ENCODE measurements at regions of chr14 and their contacts with region 1.

Region 1: DNA sequence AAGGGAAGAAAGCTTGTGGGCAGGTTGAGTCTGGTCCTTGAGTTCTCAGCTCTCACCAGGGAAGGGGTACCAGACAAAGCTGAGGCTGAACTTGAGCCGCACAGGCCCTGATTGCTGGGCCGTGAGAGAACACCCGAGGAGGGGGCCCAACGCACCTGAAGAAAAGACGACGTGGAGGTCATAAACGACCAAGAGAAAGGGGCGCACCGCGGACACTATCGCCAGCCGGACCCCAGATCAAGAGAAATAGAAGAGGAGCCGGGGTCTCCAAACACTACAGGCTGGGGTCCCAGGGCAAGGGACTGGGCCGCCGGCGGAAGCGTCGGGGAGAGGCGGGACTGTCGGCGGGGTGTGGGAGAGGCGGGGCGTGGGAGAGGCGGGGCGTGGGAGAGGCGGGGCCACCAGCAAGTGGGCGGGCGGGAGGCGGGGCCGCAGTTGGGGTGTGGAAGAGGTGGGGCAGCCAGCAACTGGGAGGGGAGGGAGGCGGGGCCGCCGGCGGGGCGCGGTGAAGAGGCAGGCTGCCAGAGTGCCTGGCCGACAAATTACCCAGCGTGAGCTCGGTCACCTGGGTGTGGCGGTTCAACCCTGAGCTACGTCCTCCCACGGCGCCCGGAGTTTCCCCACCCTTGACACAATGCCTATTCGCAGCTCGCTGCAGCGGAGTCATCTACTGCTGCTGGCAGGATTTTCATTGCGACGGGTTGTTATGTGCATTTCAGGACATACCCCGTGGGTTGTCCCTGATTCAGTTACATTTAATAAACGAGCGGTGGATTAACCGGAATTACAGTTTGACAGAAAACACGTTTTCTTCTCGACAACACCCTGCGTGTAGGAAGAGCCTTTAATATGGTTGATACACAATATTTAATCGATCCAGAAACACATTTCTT is 15.5 kb upstream of the NEMF start:
- DNase-seq: peak; percentile 97
- ATAC-seq: peak; percentile 97 to 98

Region 2: GRCh38 chr14:50109342-50109741 is 241.3 kb after region 1 on chr14:
- intact Hi-C with region 1: loop called (anchors 5 kb)
- DNase-seq: no peak
- ATAC-seq: no peak

Measured in left cardiac atrium (tissue), 4 donors.